ENCODE measurements at regions of chr2 and their contacts with region 1.

Region 1: GRCh38 chr2:97663965-97664635 is at the start of gene ACTR1B:
- DNase-seq: peak; percentile 98
- H3K4me3 Mint-ChIP-seq: peak within 1 kb of the TSS; percentile 98
- H3K27ac Mint-ChIP-seq: peak within 1 kb of the TSS; percentile 99
- H3K4me1 Mint-ChIP-seq: peaks cover 34% of the 10 kb centered on the region
- H3K27me3 Mint-ChIP-seq: no peaks in the 10 kb centered on the region
- total RNA-seq, gene ACTR1B: 97.3 to 98.8 TPM

Region 2: GRCh38 chr2:97645695-97646629 is 18.1 kb before region 1 on chr2 and contains the start of gene COX5B:
- CTCF ChIA-PET with region 1: interaction called, 100 read pairs
- POLR2A ChIA-PET with region 1: interaction called, 259 read pairs
- DNase-seq: peak; percentile 99
- H3K4me3 Mint-ChIP-seq: peak within 1 kb of the TSS; percentile 91
- H3K27ac Mint-ChIP-seq: peak within 1 kb of the TSS; percentile 92
- H3K4me1 Mint-ChIP-seq: peaks cover 24% of the 10 kb centered on the region
- H3K27me3 Mint-ChIP-seq: peaks cover 3% of the 10 kb centered on the region
- total RNA-seq, gene COX5B: 192 to 203 TPM